ENCODE measurements at regions of chr2 and their contacts with region 1.

Region 1: DNA sequence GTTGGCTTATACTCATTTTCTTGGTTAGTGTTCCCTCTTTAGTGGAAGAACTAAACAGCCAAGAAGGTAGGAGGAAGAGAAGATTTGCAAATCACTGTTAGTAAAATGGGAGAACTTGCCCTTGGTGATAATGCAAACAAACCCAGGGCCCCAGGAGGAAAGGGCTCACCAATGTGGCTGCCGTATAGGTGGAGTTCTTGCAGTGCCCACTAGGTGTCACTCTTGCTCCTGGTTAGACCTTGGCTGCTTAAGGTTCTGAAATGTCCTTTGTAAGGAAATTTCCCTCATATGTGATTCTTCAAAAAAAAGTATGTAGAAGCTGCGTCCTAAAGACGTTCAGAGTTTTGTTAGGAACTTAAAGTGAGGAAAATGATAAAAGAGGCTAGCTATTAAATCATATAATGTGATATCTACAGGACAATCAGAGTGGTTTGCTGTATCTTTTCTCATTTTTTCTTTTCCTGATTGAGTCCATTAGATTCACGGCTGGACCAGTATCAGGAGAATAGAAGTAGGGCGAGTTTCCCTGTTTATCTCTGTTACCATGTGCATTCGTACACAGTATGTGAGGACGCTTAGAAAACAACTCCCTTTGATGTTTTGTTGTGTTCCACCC is 48.6 kb downstream of the RPIA start:
- DNase-seq: peak; percentile 42
- H3K4me3 ChIP-seq: no peak overlapping the region
- H3K27ac ChIP-seq: no peak overlapping the region
- H3K4me1 ChIP-seq: peaks cover 6% of the 10 kb centered on the region
- H3K27me3 ChIP-seq: no peaks in the 10 kb centered on the region
- CTCF ChIP-seq: peak; percentile 88 to 93

Region 2: GRCh38 chr2:88753833-88754584 is 13.9 kb after region 1 on chr2:
- CTCF ChIA-PET with region 1: no interaction called
- dilution Hi-C with region 1: no loop called
- in situ Hi-C with region 1: no loop called
- intact Hi-C with region 1: no loop called
- DNase-seq: peak; percentile 28
- H3K4me3 ChIP-seq: no peak overlapping the region
- H3K27ac ChIP-seq: no peak overlapping the region
- H3K4me1 ChIP-seq: no peaks in the 10 kb centered on the region
- H3K27me3 ChIP-seq: no peaks in the 10 kb centered on the region
- CTCF ChIP-seq: no peak

Region 3: GRCh38 chr2:88810017-88810416 is 69.9 kb after region 1 on chr2:
- CTCF ChIA-PET with region 1: no interaction called
- dilution Hi-C with region 1: no loop called
- in situ Hi-C with region 1: no loop called
- intact Hi-C with region 1: loop called (anchors 5 kb)
- DNase-seq: no peak
- H3K4me3 ChIP-seq: no peak overlapping the region
- H3K27ac ChIP-seq: no peak overlapping the region
- H3K4me1 ChIP-seq: no peaks in the 10 kb centered on the region
- H3K27me3 ChIP-seq: no peaks in the 10 kb centered on the region
- CTCF ChIP-seq: no peak

Region 4: GRCh38 chr2:88874063-88874657 is 134.1 kb after region 1 on chr2:
- CTCF ChIA-PET with region 1: no interaction called
- dilution Hi-C with region 1: no loop called
- in situ Hi-C with region 1: no loop called
- intact Hi-C with region 1: loop called (anchors 1 kb)
- DNase-seq: peak; percentile 32
- H3K4me3 ChIP-seq: no peak overlapping the region
- H3K27ac ChIP-seq: no peak overlapping the region
- H3K4me1 ChIP-seq: no peaks in the 10 kb centered on the region
- H3K27me3 ChIP-seq: no peaks in the 10 kb centered on the region
- CTCF ChIP-seq: peak; percentile 79 to 85

Region 5: GRCh38 chr2:88903749-88904353 is 163.8 kb after region 1 on chr2:
- CTCF ChIA-PET with region 1: no interaction called
- dilution Hi-C with region 1: no loop called
- in situ Hi-C with region 1: loop called in 1 of 2 experiments (anchors 25 kb)
- intact Hi-C with region 1: no loop called
- DNase-seq: peak; percentile 24
- H3K4me3 ChIP-seq: no peak overlapping the region
- H3K27ac ChIP-seq: no peak overlapping the region
- H3K4me1 ChIP-seq: no peaks in the 10 kb centered on the region
- H3K27me3 ChIP-seq: no peaks in the 10 kb centered on the region
- CTCF ChIP-seq: peak; percentile 94

Region 6: GRCh38 chr2:88919087-88919738 is 179.1 kb after region 1 on chr2:
- CTCF ChIA-PET with region 1: no interaction called
- dilution Hi-C with region 1: no loop called
- in situ Hi-C with region 1: loop called in 1 of 2 experiments (anchors 25 kb)
- intact Hi-C with region 1: loop called (anchors 5 kb)
- DNase-seq: no peak
- H3K4me3 ChIP-seq: no peak overlapping the region
- H3K27ac ChIP-seq: no peak overlapping the region
- H3K4me1 ChIP-seq: no peaks in the 10 kb centered on the region
- H3K27me3 ChIP-seq: peaks cover 5% of the 10 kb centered on the region
- CTCF ChIP-seq: peak; percentile 72 to 74